ENCODE measurements at regions of chr15 and their contacts with region 1.

Region 1: GRCh38 chr15:73633111-73633990 is at the start of gene NPTN:
- DNase-seq: peak; percentile 96 to 99 (median 97)
- ATAC-seq: peak; percentile 95
- H3K4me3 ChIP-seq: peak within 1 kb of the TSS; percentile 73
- H3K4me3 Mint-ChIP-seq: peak within 1 kb of the TSS; percentile 79 to 97 (median 90)
- H3K27ac ChIP-seq: peak within 1 kb of the TSS; percentile 74
- H3K27ac Mint-ChIP-seq: peak within 1 kb of the TSS; percentile 71 to 96 (median 85)
- H3K4me1 ChIP-seq: peaks cover 16 to 26% of the 10 kb centered on the region in 2 donors
- H3K4me1 Mint-ChIP-seq: peaks cover 33 to 59% (median 49%) of the 10 kb centered on the region in 7 donors
- H3K27me3 ChIP-seq: no peaks in the 10 kb centered on the region
- H3K27me3 Mint-ChIP-seq: peaks cover 5 to 25% (median 8%) of the 10 kb centered on the region in 5 donors
- total RNA-seq, gene NPTN: 26.8 to 48.2 (median 42.6) TPM

Region 2: DNA sequence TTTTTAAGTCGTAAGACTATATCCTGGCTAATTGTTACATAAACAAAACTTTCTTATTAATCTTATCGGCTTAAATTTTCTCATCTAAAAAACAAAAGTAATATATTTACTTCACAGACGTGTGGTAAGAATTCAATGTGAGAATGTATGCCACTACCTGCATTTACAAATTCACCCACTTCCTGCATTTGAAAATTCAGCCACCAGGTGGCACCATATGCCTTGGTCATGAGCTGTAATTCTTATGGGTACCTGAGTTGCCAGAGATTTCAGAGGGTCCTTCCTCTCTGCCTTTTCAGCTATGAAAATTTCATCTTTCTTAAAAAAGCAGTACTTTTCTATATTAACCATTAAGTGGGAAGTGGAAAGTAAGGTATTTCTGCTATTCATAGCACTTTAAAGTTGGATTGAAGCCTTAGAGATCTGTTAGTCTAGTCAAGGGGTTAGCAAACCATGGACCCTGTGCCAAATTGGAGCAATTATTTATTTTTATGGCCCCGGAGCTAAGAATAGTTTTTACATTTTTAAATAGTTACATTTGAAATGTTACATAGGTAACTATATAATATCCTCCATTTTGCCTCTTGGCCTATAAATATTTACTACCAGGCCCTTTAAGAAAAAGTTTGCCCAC is 392.4 kb before region 1 on chr15:
- CTCF ChIA-PET with region 1: no interaction called
- POLR2A ChIA-PET with region 1: no interaction called
- intact Hi-C with region 1: loop called in 1 of 2 experiments (anchors 1 kb)
- DNase-seq: peak; percentile 30 to 72 (median 53)
- ATAC-seq: no peak
- H3K4me3 ChIP-seq: no peak overlapping the region
- H3K4me3 Mint-ChIP-seq: no peak overlapping the region
- H3K27ac ChIP-seq: no peak overlapping the region
- H3K27ac Mint-ChIP-seq: no peak overlapping the region
- H3K4me1 ChIP-seq: no peaks in the 10 kb centered on the region
- H3K4me1 Mint-ChIP-seq: peaks cover 0 to 6% (median 0%) of the 10 kb centered on the region in 7 donors
- H3K27me3 ChIP-seq: no peaks in the 10 kb centered on the region
- H3K27me3 Mint-ChIP-seq: no peaks in the 10 kb centered on the region

Region 3: GRCh38 chr15:73560501-73561117 is 72.7 kb before region 1 on chr15:
- CTCF ChIA-PET with region 1: interaction called, 21 read pairs
- POLR2A ChIA-PET with region 1: interaction called, 3 read pairs
- intact Hi-C with region 1: loop called (anchors 1 kb)
- DNase-seq: peak in 6 of 9 donors; percentile 14 to 49 (median 36)
- ATAC-seq: peak; percentile 76
- H3K4me3 ChIP-seq: no peak overlapping the region
- H3K4me3 Mint-ChIP-seq: no peak overlapping the region
- H3K27ac ChIP-seq: no peak overlapping the region
- H3K27ac Mint-ChIP-seq: peak overlapping the region in 1 of 9 donors; percentile 56
- H3K4me1 ChIP-seq: no peaks in the 10 kb centered on the region
- H3K4me1 Mint-ChIP-seq: peaks cover 0 to 8% (median 0%) of the 10 kb centered on the region in 7 donors
- H3K27me3 ChIP-seq: no peaks in the 10 kb centered on the region
- H3K27me3 Mint-ChIP-seq: no peaks in the 10 kb centered on the region

Region 4: GRCh38 chr15:73650416-73651126 is 17.2 kb after region 1 on chr15:
- CTCF ChIA-PET with region 1: no interaction called
- POLR2A ChIA-PET with region 1: no interaction called
- intact Hi-C with region 1: no loop called
- DNase-seq: no peak
- ATAC-seq: peak; percentile 37
- H3K4me3 ChIP-seq: no peak overlapping the region
- H3K4me3 Mint-ChIP-seq: no peak overlapping the region
- H3K27ac ChIP-seq: no peak overlapping the region
- H3K27ac Mint-ChIP-seq: no peak overlapping the region
- H3K4me1 ChIP-seq: no peaks in the 10 kb centered on the region
- H3K4me1 Mint-ChIP-seq: peaks cover 0 to 7% (median 0%) of the 10 kb centered on the region in 7 donors
- H3K27me3 ChIP-seq: no peaks in the 10 kb centered on the region
- H3K27me3 Mint-ChIP-seq: peaks cover 5 to 49% (median 42%) of the 10 kb centered on the region in 5 donors

Region 5: GRCh38 chr15:73697033-73697467 is 63.7 kb after region 1 on chr15:
- CTCF ChIA-PET with region 1: interaction called, 6 read pairs
- POLR2A ChIA-PET with region 1: no interaction called
- intact Hi-C with region 1: loop called (anchors 1 kb)
- DNase-seq: peak; percentile 34 to 80 (median 67)
- ATAC-seq: peak; percentile 93
- H3K4me3 ChIP-seq: no peak overlapping the region
- H3K4me3 Mint-ChIP-seq: peak overlapping the region in 8 of 10 donors; percentile 10 to 61 (median 44)
- H3K27ac ChIP-seq: no peak overlapping the region
- H3K27ac Mint-ChIP-seq: peak overlapping the region in 1 of 9 donors; percentile 74
- H3K4me1 ChIP-seq: peaks cover 8 to 18% of the 10 kb centered on the region in 2 donors
- H3K4me1 Mint-ChIP-seq: peaks cover 13 to 53% (median 18%) of the 10 kb centered on the region in 7 donors
- H3K27me3 ChIP-seq: peaks cover 3 to 8% of the 10 kb centered on the region in 2 donors
- H3K27me3 Mint-ChIP-seq: peaks cover 54 to 69% (median 65%) of the 10 kb centered on the region in 5 donors

Region 6: GRCh38 chr15:73991726-73992593 is 358.6 kb after region 1 on chr15 and contains the start of gene STOML1:
- CTCF ChIA-PET with region 1: no interaction called
- POLR2A ChIA-PET with region 1: no interaction called
- intact Hi-C with region 1: loop called (anchors 10 kb)
- DNase-seq: peak; percentile 85 to 99 (median 91)
- ATAC-seq: peak; percentile 91
- H3K4me3 ChIP-seq: peak within 1 kb of the TSS; percentile 68
- H3K4me3 Mint-ChIP-seq: peak within 1 kb of the TSS; percentile 82 to 100 (median 98)
- H3K27ac ChIP-seq: peak within 1 kb of the TSS; percentile 90
- H3K27ac Mint-ChIP-seq: peak within 1 kb of the TSS; percentile 72 to 99 (median 87)
- H3K4me1 ChIP-seq: peaks cover 33 to 35% of the 10 kb centered on the region in 2 donors
- H3K4me1 Mint-ChIP-seq: peaks cover 28 to 62% (median 49%) of the 10 kb centered on the region in 7 donors
- H3K27me3 ChIP-seq: no peaks in the 10 kb centered on the region
- H3K27me3 Mint-ChIP-seq: no peaks in the 10 kb centered on the region
- total RNA-seq, gene STOML1: 7.5 to 14.5 (median 12.3) TPM

Region 7: DNA sequence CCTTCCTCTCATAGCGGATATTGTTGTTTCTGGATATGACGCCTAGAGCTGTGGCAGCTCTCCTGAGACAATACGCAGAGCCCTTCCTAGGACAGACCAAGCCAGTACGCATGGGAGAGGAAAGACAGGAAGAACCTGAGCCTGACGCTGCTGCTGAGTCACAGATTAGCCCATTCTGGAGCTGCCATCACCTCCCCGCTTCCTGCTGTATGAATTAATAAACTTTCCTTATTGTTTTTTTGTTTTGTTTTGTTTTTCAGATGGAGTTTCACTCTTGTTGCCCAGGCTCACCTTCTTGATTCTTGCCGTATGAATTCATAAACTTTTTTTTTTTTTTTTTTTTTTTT is 1457.0 kb after region 1 on chr15:
- CTCF ChIA-PET with region 1: no interaction called
- POLR2A ChIA-PET with region 1: no interaction called
- intact Hi-C with region 1: no loop called
- DNase-seq: no peak
- ATAC-seq: peak; percentile 82
- H3K4me3 ChIP-seq: no peak overlapping the region
- H3K4me3 Mint-ChIP-seq: no peak overlapping the region
- H3K27ac ChIP-seq: no peak overlapping the region
- H3K27ac Mint-ChIP-seq: no peak overlapping the region
- H3K4me1 ChIP-seq: no peaks in the 10 kb centered on the region
- H3K4me1 Mint-ChIP-seq: peaks cover 0 to 13% (median 0%) of the 10 kb centered on the region in 7 donors
- H3K27me3 ChIP-seq: no peaks in the 10 kb centered on the region
- H3K27me3 Mint-ChIP-seq: peaks cover 0 to 14% (median 0%) of the 10 kb centered on the region in 5 donors